Activated T-helper 2 cell treated with anti-CD3 and anti-CD28 coated beads, Interferon-gamma antibody, Interleukin-2, Interleukin-4, amounts not matched to agents 10 μg/mL and 5 μg/mL and 100 μg/mL, durations not matched to agents 14 hours and 24 hours and 36 hours (primary cell): ENCODE measurements at regions of chr2 and their contacts with region 1.

Region 1: GRCh38 chr2:113117541-113118262 is 9.7 kb upstream of the IL1RN start:
- DNase-seq: no peak
- H3K4me3 Mint-ChIP-seq: peak overlapping the region; percentile 18
- H3K27ac Mint-ChIP-seq: peak overlapping the region; percentile 91
- H3K4me1 Mint-ChIP-seq: peaks cover 42% of the 10 kb centered on the region
- H3K27me3 Mint-ChIP-seq: no peaks in the 10 kb centered on the region

Region 2: DNA sequence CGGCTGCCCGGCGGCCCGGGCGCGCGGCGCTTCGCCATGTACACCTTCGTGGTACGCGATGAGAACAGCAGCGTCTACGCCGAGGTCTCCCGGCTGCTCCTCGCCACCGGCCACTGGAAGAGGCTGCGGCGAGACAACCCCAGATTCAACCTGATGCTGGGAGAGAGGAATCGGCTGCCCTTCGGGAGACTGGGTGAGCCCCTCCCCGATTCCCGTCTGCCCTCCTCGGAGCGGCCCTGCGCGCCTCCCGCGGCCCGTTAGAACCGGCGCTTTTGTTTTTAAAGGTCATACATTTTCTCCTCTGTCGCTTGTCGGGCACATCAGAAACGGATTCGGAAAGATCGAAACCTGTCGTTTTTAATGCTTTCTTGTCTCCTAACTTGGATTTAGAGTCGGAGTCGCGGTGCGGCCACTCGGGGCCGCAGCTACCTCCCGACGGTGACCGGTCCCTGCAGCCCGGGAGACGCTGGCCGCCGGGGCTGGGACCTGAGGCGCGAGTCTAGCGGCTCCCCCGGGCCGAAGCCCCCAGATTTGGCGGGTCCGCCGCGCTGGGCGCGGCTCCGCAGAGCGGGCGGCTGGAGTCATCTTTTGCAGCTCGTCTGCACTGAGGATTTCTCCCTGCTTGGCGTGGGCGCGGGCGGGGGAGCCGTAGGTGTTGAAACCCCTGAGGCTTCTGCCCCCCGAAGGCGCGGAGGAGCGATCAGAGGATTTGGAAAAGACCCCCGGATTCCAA is 635.2 kb before region 1 on chr2:
- intact Hi-C with region 1: no loop called
- DNase-seq: peak; percentile 14
- H3K4me3 Mint-ChIP-seq: peak overlapping the region; percentile 93
- H3K27ac Mint-ChIP-seq: peak overlapping the region; percentile 85
- H3K4me1 Mint-ChIP-seq: peaks cover 33% of the 10 kb centered on the region
- H3K27me3 Mint-ChIP-seq: no peaks in the 10 kb centered on the region

Region 3: DNA sequence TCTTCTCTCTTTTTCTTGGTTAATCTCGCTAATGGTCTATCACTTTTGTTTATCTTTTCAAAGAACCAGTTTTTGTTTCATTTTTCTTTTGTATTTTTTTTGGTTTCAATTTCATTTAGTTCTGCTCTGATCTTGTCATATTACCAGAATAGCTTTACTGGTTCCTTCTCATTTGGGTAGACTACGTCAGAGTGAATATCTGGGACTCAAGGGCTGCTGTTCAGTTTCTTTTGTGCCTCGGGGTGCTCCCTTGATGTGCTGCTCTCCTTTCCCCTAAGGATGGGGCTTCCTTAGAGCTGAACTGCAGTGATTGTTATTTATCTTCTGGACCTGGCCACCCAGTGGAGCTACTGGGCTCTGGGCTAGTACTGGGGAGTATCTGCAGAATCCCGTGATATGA is 19.7 kb before region 1 on chr2:
- intact Hi-C with region 1: loop called (anchors 2 kb)
- DNase-seq: peak; percentile 19
- H3K4me3 Mint-ChIP-seq: peak overlapping the region; percentile 67
- H3K27ac Mint-ChIP-seq: peak overlapping the region; percentile 74
- H3K4me1 Mint-ChIP-seq: peaks cover 41% of the 10 kb centered on the region
- H3K27me3 Mint-ChIP-seq: no peaks in the 10 kb centered on the region

Region 4: DNA sequence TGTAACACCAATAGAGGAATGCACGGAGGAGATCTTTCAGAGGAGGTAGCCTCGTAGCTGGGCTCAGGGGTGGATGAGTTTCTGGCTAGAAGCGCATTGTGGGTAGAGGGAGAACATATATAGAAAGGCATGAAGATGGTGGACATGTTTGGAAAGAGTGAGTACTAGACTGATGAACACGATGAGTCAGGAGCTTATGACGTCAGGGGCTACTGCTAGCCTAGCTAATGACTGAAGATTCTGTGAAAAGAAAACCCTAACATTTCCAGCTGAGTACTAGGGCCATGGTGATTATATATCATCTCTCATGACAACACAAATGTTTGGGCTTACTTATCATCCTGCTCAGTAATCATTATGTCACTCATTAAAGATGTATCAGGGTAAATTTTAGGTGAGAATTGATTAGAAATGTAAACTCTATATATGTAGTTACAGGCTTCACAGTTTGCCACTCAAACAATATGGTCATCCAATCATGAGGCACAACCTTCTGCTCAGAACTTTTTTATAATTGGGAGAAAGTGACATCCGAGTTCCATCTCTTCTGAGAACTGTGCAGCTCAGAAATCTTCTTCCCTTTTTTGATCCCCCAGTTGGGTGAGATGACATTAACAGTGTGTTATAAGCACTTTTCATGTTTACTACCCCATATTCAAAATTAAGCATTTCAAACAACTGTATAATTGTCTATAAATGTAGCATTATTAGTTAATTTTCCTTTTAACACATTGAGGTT is 12.5 kb before region 1 on chr2:
- intact Hi-C with region 1: loop called (anchors 1 kb)
- DNase-seq: no peak
- H3K4me3 Mint-ChIP-seq: no peak overlapping the region
- H3K27ac Mint-ChIP-seq: peak overlapping the region; percentile 100
- H3K4me1 Mint-ChIP-seq: peaks cover 61% of the 10 kb centered on the region
- H3K27me3 Mint-ChIP-seq: no peaks in the 10 kb centered on the region

Region 5: GRCh38 chr2:113370478-113371091 is 252.9 kb after region 1 on chr2:
- intact Hi-C with region 1: no loop called
- DNase-seq: peak; percentile 52
- H3K4me3 Mint-ChIP-seq: no peak overlapping the region
- H3K27ac Mint-ChIP-seq: no peak overlapping the region
- H3K4me1 Mint-ChIP-seq: peaks cover 12% of the 10 kb centered on the region
- H3K27me3 Mint-ChIP-seq: peaks cover 13% of the 10 kb centered on the region

Region 6: DNA sequence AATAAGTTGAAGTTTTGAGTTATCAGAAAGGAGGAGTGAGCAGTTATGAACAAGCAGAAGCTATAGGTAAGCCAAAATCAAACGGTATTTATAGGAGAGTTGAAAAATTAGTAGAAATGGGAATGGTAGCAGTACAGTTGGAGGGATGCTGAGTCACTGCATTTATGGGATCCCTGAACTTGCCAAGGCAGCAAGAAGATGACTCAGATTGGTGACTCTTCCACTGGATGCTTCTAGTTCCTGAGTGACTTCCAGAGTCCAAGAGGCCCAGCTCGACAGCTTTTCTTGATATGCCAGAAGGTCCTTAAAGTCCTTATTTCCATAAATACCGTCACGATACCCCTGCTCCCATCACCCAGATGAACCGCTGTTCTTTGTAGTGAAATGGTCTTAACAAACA is 741.1 kb after region 1 on chr2:
- intact Hi-C with region 1: no loop called
- DNase-seq: no peak
- H3K4me3 Mint-ChIP-seq: no peak overlapping the region
- H3K27ac Mint-ChIP-seq: no peak overlapping the region
- H3K4me1 Mint-ChIP-seq: peaks cover 9% of the 10 kb centered on the region
- H3K27me3 Mint-ChIP-seq: no peaks in the 10 kb centered on the region